CD8-positive, alpha-beta T cell (primary cell): ENCODE measurements at regions of chr1 and their contacts with region 1.

Region 1: GRCh38 chr1:42335050-42335808 is at the start of gene FOXJ3:
- DNase-seq: peak; percentile 82 to 99 (median 93)
- ATAC-seq: peak; percentile 92
- H3K4me3 ChIP-seq: peak within 1 kb of the TSS; percentile 82 to 85
- H3K4me3 Mint-ChIP-seq: peak within 1 kb of the TSS; percentile 98
- H3K27ac ChIP-seq: peak within 1 kb of the TSS; percentile 64 to 78
- H3K27ac Mint-ChIP-seq: peak within 1 kb of the TSS; percentile 91
- H3K4me1 ChIP-seq: peaks cover 32% of the 10 kb centered on the region
- H3K4me1 Mint-ChIP-seq: peaks cover 56% of the 10 kb centered on the region
- H3K27me3 ChIP-seq: no peaks in the 10 kb centered on the region
- H3K27me3 Mint-ChIP-seq: no peaks in the 10 kb centered on the region
- CTCF ChIP-seq: no peak
- total RNA-seq, gene FOXJ3: 80.6 to 89.3 TPM

Region 2: GRCh38 chr1:41891199-41891896 is 443.9 kb before region 1 on chr1:
- CTCF ChIA-PET with region 1: no interaction called
- POLR2A ChIA-PET with region 1: no interaction called
- intact Hi-C with region 1: loop called in 1 of 2 experiments (anchors 10 kb)
- DNase-seq: peak; percentile 22 to 89 (median 64)
- ATAC-seq: peak; percentile 98
- H3K4me3 ChIP-seq: peak overlapping the region; percentile 53 to 56
- H3K4me3 Mint-ChIP-seq: peak overlapping the region; percentile 81
- H3K27ac ChIP-seq: peak overlapping the region; percentile 58 to 74
- H3K27ac Mint-ChIP-seq: peak overlapping the region; percentile 93
- H3K4me1 ChIP-seq: peaks cover 28% of the 10 kb centered on the region
- H3K4me1 Mint-ChIP-seq: peaks cover 46% of the 10 kb centered on the region
- H3K27me3 ChIP-seq: no peaks in the 10 kb centered on the region
- H3K27me3 Mint-ChIP-seq: no peaks in the 10 kb centered on the region
- CTCF ChIP-seq: peak; percentile 60

Region 3: GRCh38 chr1:42290130-42290529 is 45.1 kb before region 1 on chr1:
- CTCF ChIA-PET with region 1: no interaction called
- POLR2A ChIA-PET with region 1: no interaction called
- intact Hi-C with region 1: no loop called
- DNase-seq: no peak
- ATAC-seq: no peak
- H3K4me3 ChIP-seq: no peak overlapping the region
- H3K4me3 Mint-ChIP-seq: no peak overlapping the region
- H3K27ac ChIP-seq: no peak overlapping the region
- H3K27ac Mint-ChIP-seq: no peak overlapping the region
- H3K4me1 ChIP-seq: no peaks in the 10 kb centered on the region
- H3K4me1 Mint-ChIP-seq: peaks cover 52% of the 10 kb centered on the region
- H3K27me3 ChIP-seq: no peaks in the 10 kb centered on the region
- H3K27me3 Mint-ChIP-seq: no peaks in the 10 kb centered on the region
- CTCF ChIP-seq: no peak

Region 4: DNA sequence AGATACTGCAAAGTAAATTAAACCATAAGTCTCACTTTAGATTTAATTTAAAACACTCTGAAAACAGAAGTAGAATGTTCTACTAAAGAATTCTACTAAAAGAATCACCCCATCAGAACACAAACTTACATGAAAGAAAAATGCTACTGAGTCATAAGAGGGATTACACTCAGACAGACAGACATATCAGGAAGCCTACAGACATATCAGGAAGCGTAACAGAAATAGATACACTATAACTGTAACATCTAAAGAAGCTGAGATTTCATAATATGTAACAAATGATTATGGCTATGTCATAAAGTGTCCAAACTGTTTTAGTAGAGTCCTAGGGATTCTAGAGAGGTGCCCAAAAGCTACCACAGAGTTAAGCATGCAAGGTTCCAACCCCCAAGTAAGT is 24.1 kb before region 1 on chr1:
- CTCF ChIA-PET with region 1: interaction called, 5 read pairs
- POLR2A ChIA-PET with region 1: interaction called, 5 read pairs
- intact Hi-C with region 1: loop called (anchors 1 to 2 kb)
- DNase-seq: no peak
- ATAC-seq: no peak
- H3K4me3 ChIP-seq: no peak overlapping the region
- H3K4me3 Mint-ChIP-seq: no peak overlapping the region
- H3K27ac ChIP-seq: no peak overlapping the region
- H3K27ac Mint-ChIP-seq: no peak overlapping the region
- H3K4me1 ChIP-seq: peaks cover 35% of the 10 kb centered on the region
- H3K4me1 Mint-ChIP-seq: peaks cover 76% of the 10 kb centered on the region
- H3K27me3 ChIP-seq: no peaks in the 10 kb centered on the region
- H3K27me3 Mint-ChIP-seq: no peaks in the 10 kb centered on the region
- CTCF ChIP-seq: no peak

Region 5: DNA sequence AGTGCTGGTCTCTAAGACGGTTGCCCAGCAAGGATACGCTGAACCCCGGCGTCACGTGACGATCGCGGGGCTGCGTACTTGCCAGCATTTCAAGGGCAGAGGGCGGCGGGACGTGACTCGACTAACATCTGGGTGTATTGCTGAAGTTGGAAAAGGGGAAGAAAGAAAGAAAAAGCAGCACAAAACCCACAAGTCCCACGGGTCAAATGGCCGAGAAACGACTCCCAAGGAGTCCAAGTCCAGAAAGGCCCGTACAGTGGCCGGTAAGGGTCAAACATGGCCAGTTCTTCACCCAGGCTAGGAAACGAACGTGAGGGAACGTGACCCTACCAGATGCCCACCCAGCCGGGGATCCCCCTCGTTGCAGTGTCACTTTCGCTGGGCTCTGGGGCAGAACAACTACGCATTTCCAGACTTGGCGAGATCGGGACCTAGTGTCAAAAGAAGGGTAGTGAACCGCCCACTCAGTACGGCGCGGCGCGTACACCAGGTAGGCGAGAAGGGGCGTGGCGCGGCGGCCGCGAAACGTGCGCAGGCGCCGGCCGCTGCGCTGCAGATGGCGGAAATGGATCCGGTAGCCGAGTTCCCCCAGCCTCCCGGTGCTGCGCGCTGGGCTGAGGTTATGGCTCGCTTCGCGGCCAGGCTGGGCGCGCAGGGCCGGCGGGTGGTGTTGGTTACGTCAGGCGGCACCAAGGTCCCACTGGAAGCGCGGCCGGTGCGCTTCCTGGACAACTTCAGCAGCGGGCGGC is 121.0 kb after region 1 on chr1 and contains the starts of genes PPCS and ZMYND12:
- CTCF ChIA-PET with region 1: no interaction called
- POLR2A ChIA-PET with region 1: interaction called, 3 read pairs
- intact Hi-C with region 1: loop called (anchors 1 kb)
- DNase-seq: peak; percentile 82 to 98 (median 91)
- ATAC-seq: peak; percentile 92
- H3K4me3 ChIP-seq: peak within 1 kb of the TSS; percentile 99
- H3K4me3 Mint-ChIP-seq: peak within 1 kb of the TSS; percentile 98
- H3K27ac ChIP-seq: peak within 1 kb of the TSS; percentile 99 to 100
- H3K27ac Mint-ChIP-seq: peak within 1 kb of the TSS; percentile 100
- H3K4me1 ChIP-seq: peaks cover 25% of the 10 kb centered on the region
- H3K4me1 Mint-ChIP-seq: peaks cover 37% of the 10 kb centered on the region
- H3K27me3 ChIP-seq: no peaks in the 10 kb centered on the region
- H3K27me3 Mint-ChIP-seq: no peaks in the 10 kb centered on the region
- CTCF ChIP-seq: peak; percentile 34
- total RNA-seq, gene PPCS: 38.0 to 38.1 TPM
- total RNA-seq, gene ZMYND12: 0.56 to 0.76 TPM

Region 6: DNA sequence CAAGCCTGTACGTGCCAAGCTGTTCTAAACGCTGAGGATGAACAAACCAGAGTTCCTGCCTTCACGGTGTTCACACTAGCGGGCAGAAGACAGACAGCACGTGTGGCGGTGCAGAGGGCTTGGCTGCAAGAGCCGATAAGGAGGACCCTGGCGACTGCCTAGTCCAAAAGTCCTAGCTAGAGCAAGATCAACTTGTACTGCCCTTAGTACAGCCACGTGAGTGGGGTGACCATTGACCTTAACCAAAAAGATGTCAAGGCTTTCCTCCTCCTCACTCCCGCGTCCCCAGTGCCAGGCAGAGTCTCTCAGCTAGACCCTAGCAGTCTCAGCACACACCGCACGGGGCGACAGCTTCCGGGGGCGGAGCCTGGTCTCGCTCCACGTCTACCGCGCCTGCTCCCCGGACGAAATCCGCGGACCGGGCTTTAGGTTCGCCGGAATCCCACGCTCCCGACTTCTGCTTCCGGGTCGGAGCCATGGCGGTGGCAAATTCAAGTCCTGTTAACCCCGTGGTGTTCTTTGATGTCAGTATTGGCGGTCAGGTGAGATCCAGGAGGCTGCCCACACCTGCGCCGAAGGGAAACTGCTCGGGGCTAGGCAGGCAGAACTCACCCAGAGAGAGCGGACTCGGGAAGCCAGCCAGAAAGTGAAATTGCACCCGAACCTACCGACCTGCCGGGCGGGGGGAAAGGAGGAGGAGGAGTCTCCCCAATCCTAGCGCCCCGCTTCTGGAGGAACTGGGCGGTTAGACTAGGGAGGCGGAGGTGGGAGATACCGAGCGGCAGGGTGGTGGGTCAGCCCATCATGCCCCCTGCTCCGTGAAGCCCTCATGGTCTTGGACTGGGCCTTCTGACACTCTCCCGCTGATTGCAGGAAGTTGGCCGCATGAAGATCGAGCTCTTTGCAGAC is 323.0 kb after region 1 on chr1 and contains the start of gene PPIH:
- CTCF ChIA-PET with region 1: no interaction called
- POLR2A ChIA-PET with region 1: no interaction called
- intact Hi-C with region 1: loop called (anchors 1 kb)
- DNase-seq: peak; percentile 87 to 97 (median 95)
- ATAC-seq: peak; percentile 98
- H3K4me3 ChIP-seq: peak within 1 kb of the TSS; percentile 78 to 90
- H3K4me3 Mint-ChIP-seq: peak within 1 kb of the TSS; percentile 99
- H3K27ac ChIP-seq: peak within 1 kb of the TSS; percentile 54 to 81
- H3K27ac Mint-ChIP-seq: peak within 1 kb of the TSS; percentile 87
- H3K4me1 ChIP-seq: peaks cover 24% of the 10 kb centered on the region
- H3K4me1 Mint-ChIP-seq: peaks cover 45% of the 10 kb centered on the region
- H3K27me3 ChIP-seq: no peaks in the 10 kb centered on the region
- H3K27me3 Mint-ChIP-seq: no peaks in the 10 kb centered on the region
- CTCF ChIP-seq: no peak
- total RNA-seq, gene PPIH: 31.0 to 33.2 TPM

Region 7: GRCh38 chr1:42766741-42767509 is 431.7 kb after region 1 on chr1 and contains the starts of genes C1orf50 and P3H1:
- CTCF ChIA-PET with region 1: no interaction called
- POLR2A ChIA-PET with region 1: interaction called, 3 read pairs
- intact Hi-C with region 1: loop called (anchors 2 to 5 kb)
- DNase-seq: peak; percentile 99 to 100 (median 99)
- ATAC-seq: peak; percentile 92
- H3K4me3 ChIP-seq: peak within 1 kb of the TSS; percentile 73 to 97
- H3K4me3 Mint-ChIP-seq: no peak within 1 kb of the TSS
- H3K27ac ChIP-seq: peak within 1 kb of the TSS; percentile 87 to 88
- H3K27ac Mint-ChIP-seq: peak within 1 kb of the TSS; percentile 97
- H3K4me1 ChIP-seq: peaks cover 40% of the 10 kb centered on the region
- H3K4me1 Mint-ChIP-seq: peaks cover 36% of the 10 kb centered on the region
- H3K27me3 ChIP-seq: no peaks in the 10 kb centered on the region
- H3K27me3 Mint-ChIP-seq: no peaks in the 10 kb centered on the region
- CTCF ChIP-seq: no peak
- total RNA-seq, gene C1orf50: 16.1 to 20.3 TPM
- total RNA-seq, gene P3H1: 19.6 to 22.5 TPM

Region 8: DNA sequence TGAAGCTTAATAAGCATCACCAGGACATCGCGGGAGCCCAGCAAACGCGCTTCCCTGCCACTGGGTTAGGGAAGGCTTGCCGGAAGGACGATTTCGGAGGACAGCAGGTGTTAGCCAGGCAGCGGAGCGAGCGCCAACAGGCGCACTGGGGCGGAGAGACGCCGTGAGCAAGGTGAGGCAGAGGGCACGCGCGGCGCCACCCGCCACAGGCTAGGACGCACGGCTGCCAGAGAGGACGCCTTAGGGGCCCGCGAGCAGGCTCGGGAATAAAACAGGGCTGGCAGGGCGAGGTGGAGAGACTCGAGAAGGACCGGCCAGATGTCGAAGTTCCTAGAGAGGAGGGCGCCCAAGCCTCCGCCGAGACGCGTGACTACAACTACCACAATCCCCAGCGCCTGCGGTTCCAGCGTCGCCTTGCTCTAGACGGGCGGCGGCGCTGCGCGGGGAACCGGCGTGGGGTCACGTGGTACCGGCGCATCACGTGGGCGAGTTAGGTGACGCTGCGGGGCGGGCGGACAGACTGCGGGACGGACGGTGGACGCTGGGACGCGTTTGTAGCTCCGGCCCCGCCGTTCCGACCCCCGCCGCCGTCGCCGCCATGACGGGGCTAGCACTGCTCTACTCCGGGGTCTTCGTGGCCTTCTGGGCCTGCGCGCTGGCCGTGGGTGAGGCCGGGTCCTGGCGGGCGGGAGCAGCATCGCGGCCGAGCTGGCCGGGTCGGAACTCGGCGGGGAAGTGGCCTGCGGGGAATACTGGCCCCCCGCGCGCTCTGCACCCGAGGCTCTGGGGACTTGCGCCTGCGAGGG is 1639.4 kb after region 1 on chr1 and contains the start of gene ATP6V0B:
- CTCF ChIA-PET with region 1: no interaction called
- POLR2A ChIA-PET with region 1: no interaction called
- intact Hi-C with region 1: loop called in 1 of 2 experiments (anchors 10 kb)
- DNase-seq: peak; percentile 83 to 96 (median 93)
- ATAC-seq: peak; percentile 69
- H3K4me3 ChIP-seq: peak within 1 kb of the TSS; percentile 95 to 97
- H3K4me3 Mint-ChIP-seq: peak within 1 kb of the TSS; percentile 92
- H3K27ac ChIP-seq: peak within 1 kb of the TSS; percentile 69 to 88
- H3K27ac Mint-ChIP-seq: peak within 1 kb of the TSS; percentile 95
- H3K4me1 ChIP-seq: peaks cover 37% of the 10 kb centered on the region
- H3K4me1 Mint-ChIP-seq: peaks cover 60% of the 10 kb centered on the region
- H3K27me3 ChIP-seq: no peaks in the 10 kb centered on the region
- H3K27me3 Mint-ChIP-seq: peaks cover 2% of the 10 kb centered on the region
- CTCF ChIP-seq: no peak
- total RNA-seq, gene ATP6V0B: 52.0 to 56.3 TPM